PC-3 (cell line): ENCODE measurements at regions of chr10 and their contacts with region 1.

Region 1: GRCh38 chr10:74502963-74503608 is 323.3 kb upstream of the KAT6B start:
- DNase-seq: peak; percentile 100
- ATAC-seq: peak; percentile 88
- H3K4me3 ChIP-seq: 0 out of 2 replicates have a peak overlapping the region, but pooled peaks have one; percentile 1
- H3K27ac ChIP-seq: peak overlapping the region; percentile 69
- H3K4me1 ChIP-seq: peaks cover 44% of the 10 kb centered on the region
- H3K27me3 ChIP-seq: no peaks in the 10 kb centered on the region
- CTCF ChIP-seq: no peak

Region 2: GRCh38 chr10:74282151-74282850 is 220.8 kb before region 1 on chr10:
- CTCF ChIA-PET with region 1: no interaction called
- POLR2A ChIA-PET with region 1: no interaction called
- intact Hi-C with region 1: loop called (anchors 5 kb)
- DNase-seq: peak; percentile 89
- ATAC-seq: peak; percentile 60
- H3K4me3 ChIP-seq: no peak overlapping the region
- H3K27ac ChIP-seq: peak overlapping the region; percentile 73
- H3K4me1 ChIP-seq: peaks cover 40% of the 10 kb centered on the region
- H3K27me3 ChIP-seq: no peaks in the 10 kb centered on the region
- CTCF ChIP-seq: no peak

Region 3: DNA sequence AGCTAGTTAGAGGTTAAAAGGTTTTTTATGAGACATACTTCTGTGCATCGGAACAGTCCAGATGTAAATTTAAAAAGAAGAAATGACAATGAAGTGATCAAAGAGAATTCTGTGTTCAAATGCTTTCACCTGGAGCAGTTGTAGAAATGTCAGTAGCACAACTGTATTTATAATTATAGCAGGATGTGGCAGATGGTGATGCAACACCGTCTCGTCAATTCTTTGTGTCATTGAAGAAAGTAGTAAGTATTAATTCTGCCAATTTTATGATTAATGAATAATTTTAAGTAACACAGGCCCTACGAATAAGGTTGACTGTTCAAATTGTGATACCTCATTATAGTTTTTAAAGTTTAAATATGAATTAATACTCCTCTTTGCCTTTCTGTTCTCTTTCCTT is 180.9 kb before region 1 on chr10:
- CTCF ChIA-PET with region 1: no interaction called
- POLR2A ChIA-PET with region 1: no interaction called
- intact Hi-C with region 1: no loop called
- DNase-seq: no peak
- ATAC-seq: no peak
- H3K4me3 ChIP-seq: no peak overlapping the region
- H3K27ac ChIP-seq: no peak overlapping the region
- H3K4me1 ChIP-seq: no peaks in the 10 kb centered on the region
- H3K27me3 ChIP-seq: no peaks in the 10 kb centered on the region
- CTCF ChIP-seq: no peak

Region 4: DNA sequence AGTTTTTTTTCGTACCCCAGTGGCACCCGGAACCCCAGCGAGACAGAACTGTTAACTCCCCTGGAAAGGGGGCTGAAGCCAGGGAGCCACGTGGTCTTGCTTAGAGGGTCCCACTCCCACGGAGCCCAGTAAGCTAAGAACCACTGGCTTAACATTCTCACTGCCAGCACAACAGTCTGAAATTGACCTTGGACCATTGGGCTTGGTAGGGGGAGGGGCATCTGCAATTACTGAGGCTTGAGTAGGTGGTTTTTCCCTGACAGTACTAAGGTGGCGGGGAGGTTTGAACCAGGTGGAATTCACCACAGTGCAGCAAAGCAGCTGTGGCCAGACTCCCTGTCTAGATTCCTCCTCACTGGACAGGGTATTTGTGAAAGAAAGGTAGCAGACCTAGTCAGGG is 155.6 kb before region 1 on chr10:
- CTCF ChIA-PET with region 1: no interaction called
- POLR2A ChIA-PET with region 1: no interaction called
- intact Hi-C with region 1: no loop called
- DNase-seq: no peak
- ATAC-seq: no peak
- H3K4me3 ChIP-seq: no peak overlapping the region
- H3K27ac ChIP-seq: no peak overlapping the region
- H3K4me1 ChIP-seq: no peaks in the 10 kb centered on the region
- H3K27me3 ChIP-seq: no peaks in the 10 kb centered on the region
- CTCF ChIP-seq: no peak

Region 5: DNA sequence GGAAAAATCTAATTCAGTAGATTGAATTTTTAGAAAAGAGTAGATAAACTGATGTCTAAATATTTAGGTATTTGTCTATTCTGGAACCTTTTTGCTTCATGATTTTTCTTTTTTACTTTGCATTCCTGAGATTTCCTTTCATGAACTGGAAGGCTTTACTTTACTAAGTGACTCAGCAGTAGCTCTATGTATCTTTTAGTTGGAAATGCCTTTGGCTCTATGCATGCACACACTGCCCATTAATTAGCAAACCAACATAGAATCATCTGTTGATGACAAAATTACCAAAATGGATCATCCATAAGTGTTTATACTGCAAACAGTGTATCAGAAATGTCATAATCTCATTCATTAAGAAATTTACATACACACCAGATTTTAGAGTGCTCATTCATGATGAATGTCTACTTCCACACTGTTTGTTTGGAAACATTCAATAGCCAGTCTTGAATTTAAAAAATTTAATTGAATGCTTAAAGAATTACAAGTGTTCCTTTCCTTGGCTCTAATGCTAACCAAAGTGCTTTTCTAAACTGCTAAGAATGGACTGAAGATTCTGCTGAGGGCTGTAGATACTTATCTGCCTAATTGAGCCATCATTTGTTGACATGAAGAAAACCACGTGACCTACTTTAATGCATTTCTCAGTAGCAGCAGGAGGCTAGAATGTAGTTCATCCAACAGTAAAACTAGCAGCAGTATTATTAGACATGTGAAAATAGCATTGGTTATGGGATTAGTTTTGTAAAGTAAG is 70.1 kb before region 1 on chr10:
- CTCF ChIA-PET with region 1: no interaction called
- POLR2A ChIA-PET with region 1: no interaction called
- intact Hi-C with region 1: loop called (anchors 2 kb)
- DNase-seq: peak; percentile 70
- ATAC-seq: peak; percentile 82
- H3K4me3 ChIP-seq: no peak overlapping the region
- H3K27ac ChIP-seq: peak overlapping the region; percentile 46
- H3K4me1 ChIP-seq: peaks cover 29% of the 10 kb centered on the region
- H3K27me3 ChIP-seq: no peaks in the 10 kb centered on the region
- CTCF ChIP-seq: no peak

Region 6: GRCh38 chr10:74453169-74453568 is 49.9 kb before region 1 on chr10:
- CTCF ChIA-PET with region 1: no interaction called
- POLR2A ChIA-PET with region 1: no interaction called
- intact Hi-C with region 1: no loop called
- DNase-seq: no peak
- ATAC-seq: no peak
- H3K4me3 ChIP-seq: no peak overlapping the region
- H3K27ac ChIP-seq: no peak overlapping the region
- H3K4me1 ChIP-seq: no peaks in the 10 kb centered on the region
- H3K27me3 ChIP-seq: no peaks in the 10 kb centered on the region
- CTCF ChIP-seq: no peak

Region 7: DNA sequence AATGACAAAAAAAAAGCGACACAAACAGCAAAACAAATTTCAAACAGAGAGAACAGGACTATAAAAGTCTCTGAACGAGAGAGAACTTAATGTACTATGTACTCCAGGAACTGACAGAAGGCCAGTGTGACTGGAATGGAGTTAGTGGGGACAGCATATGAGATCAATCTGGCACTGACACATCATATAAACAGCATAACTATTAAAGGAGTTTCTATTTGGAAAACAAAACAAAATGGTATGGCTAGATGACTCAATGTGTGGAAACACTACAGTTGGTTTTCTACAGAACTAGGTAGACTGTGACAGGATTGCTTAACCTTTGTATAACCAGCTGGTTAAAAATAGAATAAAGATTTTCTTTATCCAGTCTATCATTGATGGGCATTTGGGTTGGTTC is 90.4 kb after region 1 on chr10:
- CTCF ChIA-PET with region 1: interaction called, 3 read pairs
- POLR2A ChIA-PET with region 1: no interaction called
- intact Hi-C with region 1: loop called (anchors 2 kb)
- DNase-seq: peak; percentile 76
- ATAC-seq: peak; percentile 80
- H3K4me3 ChIP-seq: no peak overlapping the region
- H3K27ac ChIP-seq: peak overlapping the region; percentile 16
- H3K4me1 ChIP-seq: peaks cover 9% of the 10 kb centered on the region
- H3K27me3 ChIP-seq: no peaks in the 10 kb centered on the region
- CTCF ChIP-seq: no peak

Region 8: GRCh38 chr10:74598891-74599566 is 95.9 kb after region 1 on chr10:
- CTCF ChIA-PET with region 1: interaction called, 3 read pairs
- POLR2A ChIA-PET with region 1: interaction called, 4 read pairs
- intact Hi-C with region 1: loop called (anchors 2 kb)
- DNase-seq: peak; percentile 74
- ATAC-seq: peak; percentile 89
- H3K4me3 ChIP-seq: no peak overlapping the region
- H3K27ac ChIP-seq: no peak overlapping the region
- H3K4me1 ChIP-seq: peaks cover 12% of the 10 kb centered on the region
- H3K27me3 ChIP-seq: no peaks in the 10 kb centered on the region
- CTCF ChIP-seq: no peak

Region 9: GRCh38 chr10:75111367-75111906 is 608.4 kb after region 1 on chr10 and contains the start of gene SAMD8:
- CTCF ChIA-PET with region 1: no interaction called
- POLR2A ChIA-PET with region 1: interaction called, 4 read pairs
- intact Hi-C with region 1: loop called (anchors 10 kb)
- DNase-seq: peak; percentile 100
- ATAC-seq: peak; percentile 84
- H3K4me3 ChIP-seq: peak within 1 kb of the TSS; percentile 74
- H3K27ac ChIP-seq: peak within 1 kb of the TSS; percentile 64
- H3K4me1 ChIP-seq: peaks cover 25% of the 10 kb centered on the region
- H3K27me3 ChIP-seq: no peaks in the 10 kb centered on the region
- CTCF ChIP-seq: peak; percentile 50
- total RNA-seq, gene SAMD8: 47.4 and 48.6 TPM in 2 replicates